ENCODE measurements at regions of chr19 and their contacts with region 1.

Region 1: GRCh38 chr19:54357381-54357780 is 7.3 kb downstream of the LAIR1 start:
- DNase-seq: no peak
- H3K4me3 ChIP-seq: no peak overlapping the region
- H3K27ac ChIP-seq: no peak overlapping the region
- H3K4me1 ChIP-seq: no peaks in the 10 kb centered on the region
- H3K27me3 ChIP-seq: peaks cover 0 to 13% of the 10 kb centered on the region in 2 donors
- CTCF ChIP-seq: no peak
- POLR2A ChIP-seq: no peak

Region 2: GRCh38 chr19:54399189-54399588 is 41.8 kb after region 1 on chr19:
- intact Hi-C with region 1: loop called (anchors 5 kb)
- DNase-seq: peak in 1 of 2 donors; percentile 35
- H3K4me3 ChIP-seq: no peak overlapping the region
- H3K27ac ChIP-seq: peak overlapping the region; percentile 19 to 40
- H3K4me1 ChIP-seq: no peaks in the 10 kb centered on the region
- H3K27me3 ChIP-seq: no peaks in the 10 kb centered on the region
- CTCF ChIP-seq: no peak
- POLR2A ChIP-seq: no peak